ENCODE measurements at regions of chr7 and their contacts with region 1.

Region 1: GRCh38 chr7:23055582-23056178 is 41.8 kb upstream of the HYCC1 start:
- DNase-seq: peak; percentile 73
- H3K4me3 Mint-ChIP-seq: no peak overlapping the region
- H3K27ac Mint-ChIP-seq: no peak overlapping the region
- H3K4me1 Mint-ChIP-seq: no peaks in the 10 kb centered on the region
- H3K27me3 Mint-ChIP-seq: peaks cover 20% of the 10 kb centered on the region
- CTCF ChIP-seq: peak; percentile 88

Region 2: GRCh38 chr7:22234227-22234626 is 821.5 kb before region 1 on chr7:
- CTCF ChIA-PET with region 1: no interaction called
- intact Hi-C with region 1: no loop called
- DNase-seq: no peak
- H3K4me3 Mint-ChIP-seq: no peak overlapping the region
- H3K27ac Mint-ChIP-seq: no peak overlapping the region
- H3K4me1 Mint-ChIP-seq: peaks cover 17% of the 10 kb centered on the region
- H3K27me3 Mint-ChIP-seq: no peaks in the 10 kb centered on the region
- CTCF ChIP-seq: no peak

Region 3: GRCh38 chr7:22549667-22550513 is 505.8 kb before region 1 on chr7:
- CTCF ChIA-PET with region 1: no interaction called
- intact Hi-C with region 1: loop called (anchors 2 kb)
- DNase-seq: peak; percentile 90
- H3K4me3 Mint-ChIP-seq: peak overlapping the region; percentile 75
- H3K27ac Mint-ChIP-seq: peak overlapping the region; percentile 6
- H3K4me1 Mint-ChIP-seq: peaks cover 13% of the 10 kb centered on the region
- H3K27me3 Mint-ChIP-seq: peaks cover 100% of the 10 kb centered on the region
- CTCF ChIP-seq: peak; percentile 94

Region 4: GRCh38 chr7:22732556-22733126 is 323.0 kb before region 1 on chr7:
- CTCF ChIA-PET with region 1: interaction called, 12 read pairs
- intact Hi-C with region 1: loop called (anchors 1 kb)
- DNase-seq: peak; percentile 67
- H3K4me3 Mint-ChIP-seq: no peak overlapping the region
- H3K27ac Mint-ChIP-seq: no peak overlapping the region
- H3K4me1 Mint-ChIP-seq: peaks cover 20% of the 10 kb centered on the region
- H3K27me3 Mint-ChIP-seq: peaks cover 15% of the 10 kb centered on the region
- CTCF ChIP-seq: peak; percentile 69

Region 5: GRCh38 chr7:22782616-22783232 is 273.0 kb before region 1 on chr7:
- CTCF ChIA-PET with region 1: interaction called, 3 read pairs
- intact Hi-C with region 1: loop called (anchors 2 kb)
- DNase-seq: peak; percentile 86
- H3K4me3 Mint-ChIP-seq: no peak overlapping the region
- H3K27ac Mint-ChIP-seq: no peak overlapping the region
- H3K4me1 Mint-ChIP-seq: peaks cover 20% of the 10 kb centered on the region
- H3K27me3 Mint-ChIP-seq: no peaks in the 10 kb centered on the region
- CTCF ChIP-seq: peak; percentile 89

Region 6: DNA sequence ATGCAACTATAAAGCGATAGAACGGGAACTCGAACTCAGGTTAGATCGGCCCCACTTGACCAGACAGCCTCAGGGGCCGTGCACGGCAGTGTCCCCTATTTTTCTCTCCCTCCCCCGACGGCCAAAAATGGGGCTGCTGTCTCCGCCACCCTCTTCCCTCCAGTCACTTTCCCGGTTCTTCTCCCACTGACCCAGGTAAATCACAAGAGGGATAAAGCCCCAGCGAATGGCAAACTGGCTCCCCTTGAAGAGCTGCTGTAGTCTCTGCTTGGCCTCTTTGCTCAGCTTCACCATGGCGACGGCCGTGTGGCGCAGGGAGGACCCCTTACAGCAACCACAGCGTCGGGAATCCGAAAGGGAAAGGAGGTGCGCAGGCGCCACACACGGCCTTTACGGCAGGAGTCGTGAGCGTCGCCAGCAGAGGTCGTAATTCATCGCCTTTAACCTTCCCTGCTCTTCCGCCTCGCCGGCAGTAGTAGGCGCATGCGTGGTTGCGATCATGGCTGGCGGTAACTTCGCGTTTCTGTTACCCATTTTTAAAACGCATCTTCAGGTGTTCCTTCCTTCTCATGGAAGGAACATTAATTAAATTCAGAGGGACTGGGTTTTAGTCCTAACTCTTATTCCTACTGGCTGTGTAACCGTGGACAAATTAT is 233.1 kb before region 1 on chr7 and contains the start of gene TOMM7:
- CTCF ChIA-PET with region 1: interaction called, 3 read pairs
- intact Hi-C with region 1: loop called (anchors 5 kb)
- DNase-seq: peak; percentile 94
- H3K4me3 Mint-ChIP-seq: peak within 1 kb of the TSS; percentile 100
- H3K27ac Mint-ChIP-seq: peak within 1 kb of the TSS; percentile 99
- H3K4me1 Mint-ChIP-seq: peaks cover 14% of the 10 kb centered on the region
- H3K27me3 Mint-ChIP-seq: peaks cover 15% of the 10 kb centered on the region
- CTCF ChIP-seq: peak; percentile 36
- total RNA-seq, gene TOMM7: 272 and 290 TPM in 2 replicates

Region 7: DNA sequence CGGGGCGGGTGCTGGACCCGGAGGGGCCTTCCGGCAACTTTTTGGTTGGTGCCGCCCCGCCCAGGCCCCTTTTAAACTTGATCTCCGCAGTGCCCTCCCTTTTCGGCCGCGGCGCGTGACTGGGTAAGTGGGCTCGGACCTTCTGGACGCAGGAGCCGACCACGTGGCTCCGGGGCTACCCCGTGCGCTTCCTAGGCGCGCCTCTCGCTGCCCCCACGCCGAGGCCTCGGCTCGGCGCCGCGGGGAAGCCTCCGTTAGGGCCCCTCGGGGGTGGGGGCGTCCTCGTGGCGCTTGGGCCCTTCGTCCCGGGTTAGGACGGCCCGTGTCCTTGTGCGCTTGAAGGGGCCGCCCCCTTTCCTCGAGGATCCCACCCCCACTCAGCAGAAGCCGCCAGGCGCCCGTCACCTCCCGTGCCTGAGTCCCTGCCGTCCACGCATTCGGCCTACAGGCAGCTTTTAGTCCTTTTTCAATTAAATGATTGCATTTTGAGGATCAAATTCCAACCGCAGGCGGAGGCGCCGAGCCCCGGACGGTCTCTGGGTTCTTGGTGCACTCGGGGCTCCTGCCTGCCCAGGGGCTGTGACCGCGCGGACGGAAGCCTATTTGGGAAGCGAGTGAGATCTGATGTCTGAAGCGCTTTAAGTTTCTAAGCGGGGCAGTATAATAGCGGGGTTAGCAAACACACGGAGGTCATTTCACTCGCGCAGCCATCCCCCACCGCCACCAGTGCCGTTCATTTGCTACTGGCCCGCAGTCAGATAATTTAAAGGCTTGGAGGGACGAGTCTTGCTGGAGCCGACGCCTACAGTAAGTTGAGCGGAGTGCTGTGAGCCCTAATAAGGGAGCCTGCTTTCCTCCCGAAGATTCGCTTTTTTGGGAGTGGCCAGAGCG is 201.3 kb before region 1 on chr7:
- CTCF ChIA-PET with region 1: no interaction called
- intact Hi-C with region 1: loop called (anchors 2 kb)
- DNase-seq: peak; percentile 86
- H3K4me3 Mint-ChIP-seq: peak overlapping the region; percentile 89
- H3K27ac Mint-ChIP-seq: peak overlapping the region; percentile 67
- H3K4me1 Mint-ChIP-seq: peaks cover 14% of the 10 kb centered on the region
- H3K27me3 Mint-ChIP-seq: peaks cover 22% of the 10 kb centered on the region
- CTCF ChIP-seq: peak; percentile 99

Measured in Calu3 (cell line).